ENCODE measurements at regions of chr14 and their contacts with region 1.

Region 1: DNA sequence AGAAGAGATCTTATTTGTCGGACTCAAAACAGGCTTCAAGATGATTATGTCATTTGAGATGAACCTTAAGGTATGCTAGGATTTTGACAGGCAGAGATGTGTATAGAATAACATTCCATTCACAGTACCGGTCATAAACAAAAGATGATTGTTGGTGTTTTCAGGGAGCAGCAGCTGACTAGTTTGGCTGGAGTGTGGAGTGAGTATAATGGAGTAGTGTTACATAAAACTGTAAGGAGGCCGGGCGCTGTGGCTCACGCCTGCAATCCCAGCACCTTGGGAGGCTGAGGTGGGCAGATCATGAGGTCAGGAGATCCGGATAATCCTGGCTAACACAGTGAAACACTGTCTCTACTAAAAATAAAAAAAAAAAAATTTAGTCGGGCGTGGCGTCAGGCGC is 23.9 kb downstream of the SERPINA10 start:
- DNase-seq: no peak
- H3K4me3 ChIP-seq: no peak overlapping the region
- H3K27ac ChIP-seq: no peak overlapping the region
- H3K4me1 ChIP-seq: no peaks in the 10 kb centered on the region
- H3K27me3 ChIP-seq: no peaks in the 10 kb centered on the region
- CTCF ChIP-seq: no peak
- POLR2A ChIP-seq: no peak

Region 2: GRCh38 chr14:94307410-94307992 is 38.3 kb after region 1 on chr14:
- intact Hi-C with region 1: loop called (anchors 1 kb)
- DNase-seq: peak in 1 of 2 donors; percentile 40
- H3K4me3 ChIP-seq: no peak overlapping the region
- H3K27ac ChIP-seq: no peak overlapping the region
- H3K4me1 ChIP-seq: no peaks in the 10 kb centered on the region
- H3K27me3 ChIP-seq: no peaks in the 10 kb centered on the region
- CTCF ChIP-seq: no peak
- POLR2A ChIP-seq: no peak

Region 3: GRCh38 chr14:94380225-94381148 is 111.3 kb after region 1 on chr14:
- intact Hi-C with region 1: no loop called
- DNase-seq: no peak
- H3K4me3 ChIP-seq: no peak overlapping the region
- H3K27ac ChIP-seq: no peak overlapping the region
- H3K4me1 ChIP-seq: no peaks in the 10 kb centered on the region
- H3K27me3 ChIP-seq: no peaks in the 10 kb centered on the region
- CTCF ChIP-seq: no peak
- POLR2A ChIP-seq: no peak